CD8-positive, alpha-beta T cell (primary cell): ENCODE measurements at regions of chr20 and their contacts with region 1.

Region 1: DNA sequence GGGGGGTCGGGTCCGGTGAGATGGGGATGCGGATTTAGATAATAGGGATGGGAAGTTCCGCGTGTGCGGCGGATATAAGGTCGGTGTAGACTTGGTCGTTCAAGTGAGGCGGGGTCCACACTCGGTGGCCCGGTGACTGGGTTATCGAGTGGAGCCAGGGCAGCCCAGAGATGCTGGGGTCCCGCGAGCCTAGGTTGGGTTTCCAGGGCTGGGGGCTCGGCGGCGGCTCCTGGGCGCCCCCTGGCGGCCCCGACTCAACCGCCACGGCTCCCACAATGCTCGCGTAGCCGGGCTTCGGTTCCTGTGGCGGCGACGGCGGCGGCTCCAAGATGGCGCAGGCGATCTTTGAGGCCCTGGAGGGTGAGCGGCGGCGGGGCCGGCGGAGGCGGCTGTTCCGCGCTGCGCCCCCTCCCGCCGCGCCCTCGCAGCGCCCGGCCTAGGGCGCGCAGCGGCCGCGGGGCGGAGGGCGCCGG is at the start of gene ZNF341:
- DNase-seq: peak; percentile 81 to 95 (median 89)
- ATAC-seq: peak; percentile 85
- H3K4me3 ChIP-seq: peak within 1 kb of the TSS; percentile 67 to 79
- H3K4me3 Mint-ChIP-seq: peak within 1 kb of the TSS; percentile 88
- H3K27ac ChIP-seq: peak within 1 kb of the TSS; percentile 60 to 81
- H3K27ac Mint-ChIP-seq: peak within 1 kb of the TSS; percentile 92
- H3K4me1 ChIP-seq: peaks cover 12% of the 10 kb centered on the region
- H3K4me1 Mint-ChIP-seq: peaks cover 20% of the 10 kb centered on the region
- H3K27me3 ChIP-seq: no peaks in the 10 kb centered on the region
- H3K27me3 Mint-ChIP-seq: no peaks in the 10 kb centered on the region
- CTCF ChIP-seq: peak; percentile 67
- total RNA-seq, gene ZNF341: 2.4 to 2.9 TPM

Region 2: DNA sequence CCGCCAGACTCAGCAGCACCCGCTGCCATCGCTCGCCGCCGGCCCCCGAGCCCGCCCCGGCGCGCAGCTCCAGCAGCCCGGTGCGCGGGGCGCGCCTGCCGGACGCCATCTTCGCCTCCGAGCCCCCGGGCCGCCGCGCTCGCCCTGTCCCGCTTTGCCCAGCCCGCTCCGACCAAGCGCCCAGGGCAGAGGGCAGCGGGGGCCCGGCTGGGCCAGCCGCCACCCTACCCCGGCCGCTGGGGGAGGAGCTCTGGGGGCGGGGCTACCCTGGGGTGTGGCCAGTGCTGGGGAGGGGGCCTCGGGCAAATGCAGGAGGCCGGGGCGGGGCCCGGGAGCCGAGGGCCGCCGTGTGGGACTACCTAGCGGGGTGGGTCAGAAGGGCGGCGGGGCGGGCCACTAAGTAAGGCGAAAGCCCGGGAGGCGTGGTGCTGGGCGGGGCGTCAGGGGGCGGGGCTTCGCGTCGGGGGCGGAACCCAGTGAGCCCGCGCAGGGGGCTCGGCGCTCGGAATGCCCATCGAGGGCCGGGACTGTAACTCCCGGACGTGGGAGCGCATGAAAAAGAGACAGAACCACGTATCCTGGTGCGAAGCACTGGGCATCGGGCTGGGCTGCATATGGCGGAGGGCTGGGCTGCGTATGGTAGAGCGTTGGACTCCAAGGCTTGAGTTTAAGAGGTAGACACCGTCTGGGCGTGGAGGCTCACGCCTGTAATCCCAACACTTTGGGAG is 288.1 kb before region 1 on chr20 and contains the start of gene SNTA1:
- CTCF ChIA-PET with region 1: no interaction called
- POLR2A ChIA-PET with region 1: no interaction called
- intact Hi-C with region 1: loop called in 1 of 2 experiments (anchors 5 kb)
- DNase-seq: peak; percentile 67 to 90 (median 87)
- ATAC-seq: peak; percentile 69
- H3K4me3 ChIP-seq: peak within 1 kb of the TSS; percentile 85 to 97
- H3K4me3 Mint-ChIP-seq: peak within 1 kb of the TSS; percentile 94
- H3K27ac ChIP-seq: peak within 1 kb of the TSS; percentile 59 to 66
- H3K27ac Mint-ChIP-seq: peak within 1 kb of the TSS; percentile 92
- H3K4me1 ChIP-seq: peaks cover 16% of the 10 kb centered on the region
- H3K4me1 Mint-ChIP-seq: peaks cover 21% of the 10 kb centered on the region
- H3K27me3 ChIP-seq: no peaks in the 10 kb centered on the region
- H3K27me3 Mint-ChIP-seq: no peaks in the 10 kb centered on the region
- CTCF ChIP-seq: no peak
- total RNA-seq, gene SNTA1: 3.9 to 5.5 TPM

Region 3: DNA sequence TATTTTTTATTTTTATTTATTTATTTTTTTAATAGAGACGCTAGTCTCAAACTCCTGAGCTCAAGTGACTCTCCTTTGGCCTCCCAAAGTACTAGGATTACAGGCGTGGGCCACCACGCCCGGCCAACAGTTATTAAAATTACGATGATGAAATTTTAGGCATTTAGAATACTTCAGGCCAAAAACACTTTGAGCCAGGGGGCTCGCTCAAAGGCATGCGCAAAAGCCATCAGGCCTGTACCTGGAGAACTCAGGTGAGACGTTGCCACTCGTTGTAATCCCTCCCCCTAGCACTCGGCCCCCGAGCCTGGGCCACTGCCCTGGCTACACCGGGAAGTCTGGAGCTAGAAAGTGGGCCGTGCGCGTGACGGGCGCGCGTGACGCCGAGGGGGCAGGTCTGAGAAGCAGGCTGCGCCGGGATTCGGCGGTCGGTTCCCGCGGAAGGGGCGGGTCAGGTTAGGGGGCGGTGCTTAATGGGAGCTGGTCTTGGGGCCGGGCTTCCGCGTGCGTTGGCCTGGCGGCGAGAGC is 242.2 kb before region 1 on chr20:
- CTCF ChIA-PET with region 1: no interaction called
- POLR2A ChIA-PET with region 1: interaction called, 9 read pairs
- intact Hi-C with region 1: loop called in 1 of 2 experiments (anchors 1 kb)
- DNase-seq: peak; percentile 98 to 99 (median 99)
- ATAC-seq: peak; percentile 94
- H3K4me3 ChIP-seq: peak overlapping the region; percentile 58 to 89
- H3K4me3 Mint-ChIP-seq: peak overlapping the region; percentile 89
- H3K27ac ChIP-seq: peak overlapping the region; percentile 96 to 97
- H3K27ac Mint-ChIP-seq: peak overlapping the region; percentile 96
- H3K4me1 ChIP-seq: peaks cover 11% of the 10 kb centered on the region
- H3K4me1 Mint-ChIP-seq: peaks cover 19% of the 10 kb centered on the region
- H3K27me3 ChIP-seq: no peaks in the 10 kb centered on the region
- H3K27me3 Mint-ChIP-seq: no peaks in the 10 kb centered on the region
- CTCF ChIP-seq: no peak

Region 4: DNA sequence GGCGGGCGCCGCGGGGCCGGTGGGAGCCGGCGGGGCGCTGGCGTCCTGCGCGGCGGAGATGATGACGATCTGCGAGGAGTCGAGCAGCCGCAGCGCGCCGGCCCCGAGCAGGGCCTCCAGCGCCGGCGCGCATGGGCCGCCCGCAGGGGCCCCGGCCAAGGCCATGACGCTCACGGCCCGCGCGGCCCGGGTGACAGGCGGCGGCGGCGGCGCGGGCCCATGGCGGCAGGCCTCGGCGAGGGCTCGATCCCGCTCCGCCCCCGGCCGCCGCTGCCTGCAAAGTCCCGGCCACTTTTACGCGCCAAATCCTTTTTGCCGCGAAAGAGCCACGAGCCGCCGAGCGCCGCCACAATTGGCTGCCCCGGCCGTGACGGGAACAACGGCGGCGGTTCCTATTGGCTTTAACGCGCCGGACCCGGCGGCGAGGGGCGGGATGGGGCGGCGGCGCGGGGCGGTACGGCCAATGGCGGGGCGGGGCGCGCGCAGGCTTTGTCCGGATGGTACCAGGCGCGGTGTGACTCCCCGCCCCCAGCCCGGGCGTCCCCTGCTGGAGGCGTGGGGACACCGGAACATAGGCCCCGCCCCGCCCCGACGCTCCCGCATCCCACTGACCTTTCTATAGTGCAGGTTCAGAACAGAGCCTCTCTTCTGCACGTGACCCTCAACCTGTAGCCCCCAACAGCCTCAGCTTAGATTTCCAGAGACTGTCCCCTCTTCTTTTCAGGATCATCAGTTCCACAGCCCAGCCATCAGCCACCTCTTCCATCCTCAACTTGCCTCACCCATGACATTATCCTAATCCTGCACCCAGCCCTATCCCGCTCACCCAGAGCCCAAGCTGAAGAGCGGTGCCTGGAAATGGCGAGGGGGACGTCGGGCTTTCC is 45.4 kb before region 1 on chr20 and contains the start of gene E2F1:
- CTCF ChIA-PET with region 1: interaction called, 3 read pairs
- POLR2A ChIA-PET with region 1: interaction called, 17 read pairs
- intact Hi-C with region 1: loop called (anchors 1 to 5 kb)
- DNase-seq: peak; percentile 87 to 97 (median 93)
- ATAC-seq: peak; percentile 89
- H3K4me3 ChIP-seq: peak within 1 kb of the TSS; percentile 39
- H3K4me3 Mint-ChIP-seq: peak within 1 kb of the TSS; percentile 81
- H3K27ac ChIP-seq: peak within 1 kb of the TSS; percentile 15 to 49
- H3K27ac Mint-ChIP-seq: peak within 1 kb of the TSS; percentile 79
- H3K4me1 ChIP-seq: peaks cover 35% of the 10 kb centered on the region
- H3K4me1 Mint-ChIP-seq: peaks cover 37% of the 10 kb centered on the region
- H3K27me3 ChIP-seq: no peaks in the 10 kb centered on the region
- H3K27me3 Mint-ChIP-seq: no peaks in the 10 kb centered on the region
- CTCF ChIP-seq: no peak
- total RNA-seq, gene E2F1: 1.2 to 1.3 TPM

Region 5: GRCh38 chr20:33753763-33754162 is 22.0 kb after region 1 on chr20:
- CTCF ChIA-PET with region 1: no interaction called
- POLR2A ChIA-PET with region 1: interaction called, 11 read pairs
- intact Hi-C with region 1: loop called in 1 of 2 experiments (anchors 1 kb)
- DNase-seq: no peak
- ATAC-seq: no peak
- H3K4me3 ChIP-seq: no peak overlapping the region
- H3K4me3 Mint-ChIP-seq: no peak overlapping the region
- H3K27ac ChIP-seq: no peak overlapping the region
- H3K27ac Mint-ChIP-seq: no peak overlapping the region
- H3K4me1 ChIP-seq: peaks cover 6% of the 10 kb centered on the region
- H3K4me1 Mint-ChIP-seq: peaks cover 20% of the 10 kb centered on the region
- H3K27me3 ChIP-seq: no peaks in the 10 kb centered on the region
- H3K27me3 Mint-ChIP-seq: no peaks in the 10 kb centered on the region
- CTCF ChIP-seq: no peak

Region 6: GRCh38 chr20:34363062-34363464 is 631.3 kb after region 1 on chr20 and contains the start of gene ITCH:
- CTCF ChIA-PET with region 1: no interaction called
- POLR2A ChIA-PET with region 1: no interaction called
- intact Hi-C with region 1: loop called in 1 of 2 experiments (anchors 5 kb)
- DNase-seq: peak; percentile 80 to 96 (median 93)
- ATAC-seq: peak; percentile 99
- H3K4me3 ChIP-seq: peak within 1 kb of the TSS; percentile 92 to 93
- H3K4me3 Mint-ChIP-seq: peak within 1 kb of the TSS; percentile 99
- H3K27ac ChIP-seq: peak within 1 kb of the TSS; percentile 86 to 91
- H3K27ac Mint-ChIP-seq: peak within 1 kb of the TSS; percentile 99
- H3K4me1 ChIP-seq: peaks cover 40% of the 10 kb centered on the region
- H3K4me1 Mint-ChIP-seq: peaks cover 45% of the 10 kb centered on the region
- H3K27me3 ChIP-seq: no peaks in the 10 kb centered on the region
- H3K27me3 Mint-ChIP-seq: no peaks in the 10 kb centered on the region
- CTCF ChIP-seq: no peak
- total RNA-seq, gene ITCH: 50.4 to 55.2 TPM